Activated B cell treated with CpG ODN at 0.5 μM for 24 hours (primary cell): ENCODE measurements at regions of chr6 and their contacts with region 1.

Region 1: DNA sequence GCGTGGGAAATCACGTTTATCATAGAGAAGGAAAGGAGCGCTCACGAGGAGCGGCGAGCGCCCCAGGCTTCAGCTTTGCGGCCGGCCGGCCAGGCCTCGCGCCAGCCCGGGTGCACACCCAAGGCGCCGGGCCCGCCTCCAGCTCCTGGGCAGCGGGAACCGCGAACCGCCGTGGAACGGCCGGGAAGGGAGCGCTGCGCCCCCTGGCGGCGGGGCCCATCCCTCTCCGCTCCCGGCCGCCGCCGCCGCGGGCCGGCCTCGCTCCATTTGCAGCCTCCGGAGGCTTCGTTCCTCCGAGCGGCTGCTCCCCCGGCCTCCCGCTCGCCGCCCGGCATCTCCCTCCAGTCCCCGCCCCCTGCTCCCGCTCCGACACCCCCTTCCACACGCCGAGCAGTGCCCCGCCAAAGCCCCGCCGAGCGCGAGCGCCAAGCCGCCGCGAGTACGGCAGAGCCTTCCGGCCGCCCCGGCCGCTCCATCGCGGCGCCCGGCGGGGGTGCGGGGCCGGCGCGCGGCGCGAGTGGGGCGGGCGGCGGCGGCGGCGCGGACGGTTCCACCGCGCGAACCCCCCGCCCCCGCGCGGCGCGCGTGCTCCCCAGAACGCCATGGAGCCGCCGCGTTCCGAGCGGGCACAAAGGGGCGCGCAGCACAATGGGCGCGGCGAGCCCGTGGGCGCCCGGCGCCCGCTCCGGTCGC is 956 bp downstream of the BEND3 start:
- DNase-seq: peak; percentile 79
- ATAC-seq: peak; percentile 51
- H3K4me3 Mint-ChIP-seq: peak overlapping the region; percentile 82
- H3K27ac Mint-ChIP-seq: no peak overlapping the region
- H3K4me1 Mint-ChIP-seq: peaks cover 19% of the 10 kb centered on the region
- H3K27me3 Mint-ChIP-seq: peaks cover 5% of the 10 kb centered on the region
- CTCF ChIP-seq: no peak

Region 2: DNA sequence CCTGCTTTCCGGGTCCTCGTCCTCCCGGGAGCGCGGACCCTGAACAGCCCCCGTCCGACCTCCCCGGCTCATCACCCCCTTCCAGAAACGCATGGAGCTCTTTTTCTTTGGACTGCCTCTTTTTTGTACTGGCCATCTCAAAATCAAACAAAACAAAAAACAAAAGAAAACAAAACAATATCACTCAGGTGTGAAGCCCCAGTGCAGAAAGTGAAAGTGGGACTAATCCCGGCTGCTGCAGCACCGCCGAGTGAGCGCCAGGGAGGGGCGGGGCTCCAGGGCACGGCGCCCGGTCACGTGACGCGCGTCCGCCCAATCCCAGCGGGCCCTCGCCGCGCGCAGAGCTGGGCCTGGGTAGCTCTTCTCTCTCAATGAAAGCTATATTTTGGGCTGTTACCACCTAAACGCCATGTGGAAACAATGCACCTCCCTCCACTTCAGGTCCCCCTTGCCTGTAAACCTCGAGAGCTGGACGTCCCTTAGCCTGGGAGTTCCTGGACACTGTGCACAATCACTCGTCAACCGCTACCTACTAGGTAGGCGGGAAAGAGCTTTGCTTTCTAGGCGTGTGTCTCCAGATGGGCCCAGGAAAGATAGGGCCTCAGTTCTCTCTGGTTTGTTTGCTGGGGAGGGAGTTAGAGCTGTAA is 1121.9 kb before region 1 on chr6:
- CTCF ChIA-PET with region 1: no interaction called
- POLR2A ChIA-PET with region 1: no interaction called
- intact Hi-C with region 1: loop called (anchors 5 kb)
- DNase-seq: peak; percentile 88
- ATAC-seq: peak; percentile 92
- H3K4me3 Mint-ChIP-seq: peak overlapping the region; percentile 96
- H3K27ac Mint-ChIP-seq: peak overlapping the region; percentile 97
- H3K4me1 Mint-ChIP-seq: peaks cover 24% of the 10 kb centered on the region
- H3K27me3 Mint-ChIP-seq: peaks cover 21% of the 10 kb centered on the region
- CTCF ChIP-seq: no peak

Region 3: GRCh38 chr6:106360410-106360988 is 753.9 kb before region 1 on chr6 and contains the start of gene CRYBG1:
- CTCF ChIA-PET with region 1: no interaction called
- POLR2A ChIA-PET with region 1: no interaction called
- intact Hi-C with region 1: loop called (anchors 5 kb)
- DNase-seq: peak; percentile 67
- ATAC-seq: peak; percentile 80
- H3K4me3 Mint-ChIP-seq: peak within 1 kb of the TSS; percentile 85
- H3K27ac Mint-ChIP-seq: no peak within 1 kb of the TSS
- H3K4me1 Mint-ChIP-seq: peaks cover 11% of the 10 kb centered on the region
- H3K27me3 Mint-ChIP-seq: peaks cover 29% of the 10 kb centered on the region
- CTCF ChIP-seq: peak; percentile 80
- total RNA-seq, gene CRYBG1: 32.3 and 33.6 TPM in 2 replicates

Region 4: DNA sequence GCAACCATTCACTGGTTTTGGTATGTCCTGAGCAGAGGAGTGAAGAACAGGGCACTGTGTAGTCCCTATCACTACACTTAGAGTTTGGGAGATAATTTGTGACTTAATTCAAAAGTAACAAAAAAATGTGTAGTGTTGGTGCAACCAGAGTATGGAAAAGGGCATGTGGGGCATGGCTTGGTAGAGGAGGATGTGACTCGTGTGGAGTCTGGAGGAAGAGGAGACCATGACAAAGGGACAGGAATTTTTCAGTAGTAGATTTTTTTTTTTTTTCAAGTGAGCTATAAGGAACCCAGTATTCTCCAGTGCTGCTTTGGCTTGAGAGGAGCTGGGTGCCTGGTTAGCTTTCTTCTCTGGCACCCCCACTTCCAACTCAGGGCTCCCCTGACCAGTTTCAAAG is 81.2 kb before region 1 on chr6:
- CTCF ChIA-PET with region 1: interaction called, 3 read pairs
- POLR2A ChIA-PET with region 1: interaction called, 5 read pairs
- intact Hi-C with region 1: loop called (anchors 1 kb)
- DNase-seq: no peak
- ATAC-seq: no peak
- H3K4me3 Mint-ChIP-seq: no peak overlapping the region
- H3K27ac Mint-ChIP-seq: no peak overlapping the region
- H3K4me1 Mint-ChIP-seq: peaks cover 21% of the 10 kb centered on the region
- H3K27me3 Mint-ChIP-seq: no peaks in the 10 kb centered on the region
- CTCF ChIP-seq: no peak

Region 5: GRCh38 chr6:107489636-107490565 is 375.5 kb after region 1 on chr6 and contains the start of gene SOBP:
- CTCF ChIA-PET with region 1: no interaction called
- POLR2A ChIA-PET with region 1: no interaction called
- intact Hi-C with region 1: loop called (anchors 2 kb)
- DNase-seq: peak; percentile 58
- ATAC-seq: peak; percentile 60
- H3K4me3 Mint-ChIP-seq: peak within 1 kb of the TSS; percentile 90
- H3K27ac Mint-ChIP-seq: peak within 1 kb of the TSS; percentile 63
- H3K4me1 Mint-ChIP-seq: peaks cover 26% of the 10 kb centered on the region
- H3K27me3 Mint-ChIP-seq: peaks cover 28% of the 10 kb centered on the region
- CTCF ChIP-seq: no peak
- total RNA-seq, gene SOBP: 1.1 TPM in 2 replicates

Region 6: GRCh38 chr6:107957909-107958688 is 843.7 kb after region 1 on chr6 and contains the start of gene SEC63:
- CTCF ChIA-PET with region 1: no interaction called
- POLR2A ChIA-PET with region 1: no interaction called
- intact Hi-C with region 1: loop called (anchors 5 kb)
- DNase-seq: peak; percentile 95
- ATAC-seq: peak; percentile 97
- H3K4me3 Mint-ChIP-seq: peak within 1 kb of the TSS; percentile 98
- H3K27ac Mint-ChIP-seq: peak within 1 kb of the TSS; percentile 94
- H3K4me1 Mint-ChIP-seq: peaks cover 27% of the 10 kb centered on the region
- H3K27me3 Mint-ChIP-seq: no peaks in the 10 kb centered on the region
- CTCF ChIP-seq: no peak
- total RNA-seq, gene SEC63: 64.4 and 68.3 TPM in 2 replicates